Endothelial cell of umbilical vein (primary cell): ENCODE measurements at regions of chr21 and their contacts with region 1.

Region 1: DNA sequence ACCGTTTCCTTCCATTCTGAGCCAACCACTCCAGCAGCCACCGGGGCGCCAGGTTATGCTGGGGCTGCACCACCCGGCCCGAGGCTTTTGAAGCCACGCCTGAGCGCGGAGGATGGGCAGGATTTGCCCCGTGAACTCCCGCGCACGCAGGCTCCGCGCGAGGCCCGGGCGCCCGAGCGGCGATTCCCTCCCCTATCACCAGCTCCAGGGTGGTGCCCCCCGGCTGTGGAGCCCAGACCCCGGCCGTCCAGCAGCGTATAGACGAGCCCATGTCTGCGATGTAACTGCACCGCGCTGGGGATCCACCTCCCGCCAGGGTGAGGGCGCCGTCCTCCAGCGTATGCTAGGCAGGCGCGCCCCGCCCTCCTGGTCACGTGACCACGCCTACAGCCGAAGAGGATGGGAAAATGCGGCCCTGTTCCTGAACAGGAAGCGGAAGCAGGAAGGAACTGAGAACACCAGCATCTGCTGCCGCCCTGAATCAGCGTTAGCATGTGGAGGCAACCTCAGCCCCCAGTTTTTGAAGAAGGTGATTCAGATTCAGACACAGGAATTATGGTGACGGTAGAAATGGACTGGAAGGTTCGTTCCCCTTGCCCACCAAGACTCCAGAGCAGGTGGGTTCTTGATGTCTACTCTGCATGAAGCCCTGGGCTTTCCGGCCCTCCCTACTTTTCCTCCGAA is 46.0 kb downstream of the VPS26C start:
- DNase-seq: peak; percentile 93
- H3K4me3 ChIP-seq: peak overlapping the region; percentile 17 to 53 (median 52)
- H3K27ac ChIP-seq: peak overlapping the region; percentile 72
- H3K4me1 ChIP-seq: peaks cover 8% of the 10 kb centered on the region
- H3K27me3 ChIP-seq: no peaks in the 10 kb centered on the region
- CTCF ChIP-seq: peak; percentile 10 to 64
- POLR2A ChIP-seq: no peak

Region 2: GRCh38 chr21:36450511-36450910 is 770.6 kb before region 1 on chr21:
- CTCF ChIA-PET with region 1: no interaction called
- POLR2A ChIA-PET with region 1: no interaction called
- dilution Hi-C with region 1: no loop called
- intact Hi-C with region 1: loop called (anchors 10 kb)
- DNase-seq: peak; percentile 57
- H3K4me3 ChIP-seq: no peak overlapping the region
- H3K27ac ChIP-seq: peak overlapping the region; percentile 61
- H3K4me1 ChIP-seq: peaks cover 32% of the 10 kb centered on the region
- H3K27me3 ChIP-seq: no peaks in the 10 kb centered on the region
- CTCF ChIP-seq: no peak
- POLR2A ChIP-seq: no peak

Region 3: DNA sequence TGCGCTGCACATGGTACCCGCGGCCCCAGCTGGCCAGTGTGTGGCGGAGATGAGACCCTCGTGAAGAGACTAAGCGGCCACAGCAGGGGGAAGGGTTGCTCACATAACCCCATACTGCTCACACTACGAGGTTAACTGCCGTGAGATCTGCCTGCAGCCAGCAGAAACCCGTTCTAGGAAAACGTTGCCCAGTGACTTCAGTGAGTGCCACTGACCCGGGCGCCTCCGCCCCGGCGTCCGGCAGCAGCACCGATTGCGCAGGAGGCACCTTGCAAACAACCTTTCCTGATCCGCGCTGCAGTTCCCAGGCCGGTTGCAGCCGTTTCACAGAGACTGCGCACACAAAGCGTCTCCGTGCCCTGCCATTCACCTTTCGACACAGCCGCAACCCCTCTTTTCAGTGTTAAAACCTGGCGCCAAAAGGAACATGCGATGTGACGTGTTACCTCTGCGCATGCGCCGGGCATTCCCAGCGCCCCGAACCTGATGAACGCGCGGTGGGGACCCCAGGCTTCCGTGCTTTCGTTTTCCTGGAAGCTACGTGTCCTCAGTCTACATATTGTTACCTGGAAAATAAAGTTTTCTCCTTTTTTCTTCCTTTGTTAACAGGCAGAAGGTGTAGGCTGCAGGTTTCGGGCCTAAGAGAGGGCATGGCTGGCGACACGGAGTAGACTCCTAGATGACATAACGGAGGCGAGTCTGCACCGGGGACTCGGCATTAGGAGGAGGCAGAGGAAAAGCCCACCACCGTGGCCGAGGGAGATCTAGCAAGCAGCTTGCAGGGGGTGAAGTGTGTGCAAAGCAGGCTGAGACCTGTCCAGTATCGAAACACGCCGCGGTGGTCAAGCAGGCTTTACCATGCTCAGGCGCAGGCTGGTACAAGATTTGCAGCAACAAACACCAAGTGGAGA is 37.1 kb after region 1 on chr21:
- CTCF ChIA-PET with region 1: no interaction called
- POLR2A ChIA-PET with region 1: no interaction called
- dilution Hi-C with region 1: no loop called
- intact Hi-C with region 1: loop called (anchors 2 kb)
- DNase-seq: peak; percentile 75
- H3K4me3 ChIP-seq: peak overlapping the region; percentile 40 to 46 (median 41)
- H3K27ac ChIP-seq: peak overlapping the region; percentile 77
- H3K4me1 ChIP-seq: peaks cover 22% of the 10 kb centered on the region
- H3K27me3 ChIP-seq: no peaks in the 10 kb centered on the region
- CTCF ChIP-seq: peak in 1 of 2 donors; percentile 14
- POLR2A ChIP-seq: no peak

Region 4: DNA sequence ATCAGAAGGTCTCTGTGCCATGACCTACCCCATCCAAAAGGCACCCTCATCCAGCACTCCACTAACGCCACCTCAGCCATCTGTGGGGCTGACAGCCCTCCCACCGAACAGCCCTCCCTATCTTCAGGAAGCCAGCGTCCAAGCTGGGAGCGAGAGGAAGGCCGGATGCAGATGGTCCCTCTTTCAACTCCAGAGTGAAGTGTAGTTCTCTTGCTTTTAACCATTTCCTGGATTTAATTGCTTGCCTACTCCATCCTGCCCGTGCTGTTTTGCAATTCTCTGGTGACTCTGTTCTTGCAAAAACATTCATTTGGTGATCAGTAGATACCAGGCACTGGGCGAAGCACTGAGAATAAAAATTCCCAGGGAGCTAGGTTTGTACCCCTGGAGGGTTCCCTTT is 137.3 kb after region 1 on chr21:
- CTCF ChIA-PET with region 1: interaction called, 5 read pairs
- POLR2A ChIA-PET with region 1: no interaction called
- dilution Hi-C with region 1: no loop called
- intact Hi-C with region 1: loop called (anchors 2 kb)
- DNase-seq: peak; percentile 97
- H3K4me3 ChIP-seq: no peak overlapping the region
- H3K27ac ChIP-seq: peak overlapping the region; percentile 86
- H3K4me1 ChIP-seq: peaks cover 20% of the 10 kb centered on the region
- H3K27me3 ChIP-seq: no peaks in the 10 kb centered on the region
- CTCF ChIP-seq: no peak
- POLR2A ChIP-seq: peak; percentile 82

Region 5: DNA sequence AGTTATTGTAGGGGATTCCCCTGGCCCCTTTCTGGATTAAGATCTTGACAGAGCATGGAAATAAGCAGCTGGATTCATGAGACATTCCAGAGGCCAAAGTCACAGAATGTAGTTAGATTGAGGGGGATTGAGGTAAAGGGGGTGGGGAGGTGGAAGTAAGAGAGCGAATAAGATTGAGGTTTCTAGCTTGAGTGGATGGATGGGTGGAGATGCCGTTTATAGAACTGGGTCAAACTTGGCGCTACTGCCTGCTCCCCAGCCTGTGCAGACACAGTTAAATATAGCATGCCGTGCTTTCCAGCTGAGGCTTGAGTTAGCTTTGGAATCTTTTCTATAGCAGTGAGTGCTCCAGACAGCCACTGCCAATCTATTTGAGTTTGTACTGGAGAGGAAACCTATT is 231.1 kb after region 1 on chr21:
- CTCF ChIA-PET with region 1: no interaction called
- POLR2A ChIA-PET with region 1: no interaction called
- dilution Hi-C with region 1: no loop called
- intact Hi-C with region 1: loop called (anchors 2 kb)
- DNase-seq: peak; percentile 35
- H3K4me3 ChIP-seq: no peak overlapping the region
- H3K27ac ChIP-seq: no peak overlapping the region
- H3K4me1 ChIP-seq: peaks cover 38% of the 10 kb centered on the region
- H3K27me3 ChIP-seq: no peaks in the 10 kb centered on the region
- CTCF ChIP-seq: no peak
- POLR2A ChIP-seq: no peak